ENCODE measurements at regions of chr3 and their contacts with region 1.

Region 1: DNA sequence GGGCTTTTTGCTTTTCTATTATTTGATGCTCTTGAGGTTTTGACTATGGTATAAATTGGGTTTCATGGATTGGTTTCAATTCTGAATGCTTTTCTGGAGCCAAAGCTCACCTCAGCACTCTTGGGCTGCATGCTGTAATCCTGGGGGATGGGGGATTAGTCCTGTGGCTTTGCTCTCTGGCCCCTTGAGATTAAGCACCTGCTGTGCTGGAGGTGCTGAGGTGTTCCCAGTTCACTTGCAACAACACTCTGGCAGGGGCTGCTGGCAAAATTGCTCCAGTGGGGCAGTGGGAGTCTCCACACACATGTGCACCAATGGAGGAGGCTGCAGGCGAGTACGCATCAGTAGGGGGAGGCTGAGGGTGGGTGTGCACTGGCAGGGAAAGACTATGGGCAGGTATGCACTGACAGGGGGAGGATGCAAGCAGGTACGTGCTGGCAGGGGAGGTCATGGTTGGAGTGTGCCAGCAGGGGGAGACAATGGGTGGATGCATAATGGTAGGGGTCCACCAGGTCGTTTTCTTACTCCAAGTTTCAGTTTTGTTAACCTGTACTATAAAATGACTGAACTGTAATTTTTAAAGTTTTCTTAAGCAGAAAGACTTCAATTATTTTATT is 489.2 kb downstream of the FGF12 start:
- DNase-seq: no peak
- H3K4me3 ChIP-seq: no peak overlapping the region
- H3K27ac ChIP-seq: no peak overlapping the region
- H3K4me1 ChIP-seq: no peaks in the 10 kb centered on the region
- H3K27me3 ChIP-seq: no peaks in the 10 kb centered on the region
- CTCF ChIP-seq: no peak
- POLR2A ChIP-seq: no peak

Region 2: DNA sequence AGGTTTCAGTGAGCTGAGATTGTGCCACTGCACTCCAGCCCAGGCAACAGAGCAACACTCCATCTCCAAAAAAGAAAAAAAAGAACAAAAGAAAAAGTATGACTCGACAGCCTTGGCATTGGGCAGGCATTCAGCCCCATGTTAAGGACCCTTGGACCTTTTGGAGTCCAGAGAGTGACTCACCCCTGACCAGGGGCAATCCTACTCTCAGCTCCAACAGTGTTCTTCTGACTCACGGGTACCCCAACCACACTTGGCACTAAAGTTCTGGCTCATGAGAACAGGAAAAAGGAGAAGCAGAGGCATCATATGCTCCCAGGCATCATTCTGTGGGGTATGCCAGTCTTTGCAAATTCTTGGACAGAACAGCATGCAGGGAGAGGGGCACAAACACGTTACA is 1645.5 kb after region 1 on chr3:
- intact Hi-C with region 1: loop called (anchors 5 kb)
- DNase-seq: no peak
- H3K4me3 ChIP-seq: no peak overlapping the region
- H3K27ac ChIP-seq: no peak overlapping the region
- H3K4me1 ChIP-seq: peaks cover 8% of the 10 kb centered on the region
- H3K27me3 ChIP-seq: no peaks in the 10 kb centered on the region
- CTCF ChIP-seq: no peak
- POLR2A ChIP-seq: no peak

Measured in testis (tissue), 5 donors.